Heart left ventricle (tissue), 16 donors: ENCODE measurements at regions of chr2 and their contacts with region 1.

Region 1: DNA sequence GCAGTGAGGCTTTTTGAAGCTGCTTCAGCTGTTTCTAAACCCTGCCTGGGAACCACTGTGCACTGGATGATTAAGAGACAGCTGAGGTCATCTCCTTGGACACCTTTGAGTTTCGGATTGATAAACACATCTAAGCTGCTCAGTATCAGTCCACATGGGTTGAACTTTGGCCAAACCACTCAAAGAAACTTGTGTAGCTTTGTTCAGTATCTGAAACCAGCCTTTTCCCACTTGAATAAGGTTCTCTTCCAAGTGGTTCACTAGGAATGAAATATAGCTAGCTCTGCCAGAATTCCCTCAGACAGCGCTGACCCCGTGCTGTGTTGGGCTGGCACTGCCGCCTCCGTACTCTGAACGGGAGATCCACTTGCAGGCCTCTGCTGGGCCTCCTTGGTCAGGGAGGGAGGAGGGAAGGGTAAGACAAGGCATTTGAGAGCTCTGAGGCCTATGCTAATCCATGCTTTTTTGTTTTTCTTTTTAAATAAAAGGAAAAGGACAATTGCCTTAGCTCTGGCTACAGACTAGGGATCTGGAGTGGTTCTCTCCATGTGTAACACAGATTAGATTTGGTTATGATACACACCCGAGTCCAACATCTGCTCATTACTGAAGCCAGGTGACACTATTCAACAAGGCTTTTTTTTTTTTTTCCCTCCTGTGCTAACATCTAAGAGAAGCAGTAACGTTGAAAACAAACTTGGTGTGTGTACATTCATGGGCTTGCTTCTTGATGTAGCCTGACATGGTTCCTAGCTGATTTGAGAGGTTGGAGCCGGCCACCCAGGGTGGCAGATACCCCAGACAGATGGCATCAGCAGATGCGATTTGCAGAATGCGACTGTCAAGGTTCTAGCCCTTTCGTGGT is 67.7 kb downstream of the NCK2 start:
- DNase-seq: peak in 2 of 5 donors; percentile 43 to 56
- ATAC-seq: peak; percentile 88 to 92 (median 90)
- H3K4me3 ChIP-seq: no peak overlapping the region
- H3K27ac ChIP-seq: peak overlapping the region in 5 of 12 donors; percentile 1 to 62 (median 17)
- H3K4me1 ChIP-seq: peaks cover 4 to 60% (median 41%) of the 10 kb centered on the region in 12 donors
- H3K27me3 ChIP-seq: no peaks in the 10 kb centered on the region
- CTCF ChIP-seq: peak in 1 of 12 donors; percentile 28
- POLR2A ChIP-seq: no peak

Region 2: DNA sequence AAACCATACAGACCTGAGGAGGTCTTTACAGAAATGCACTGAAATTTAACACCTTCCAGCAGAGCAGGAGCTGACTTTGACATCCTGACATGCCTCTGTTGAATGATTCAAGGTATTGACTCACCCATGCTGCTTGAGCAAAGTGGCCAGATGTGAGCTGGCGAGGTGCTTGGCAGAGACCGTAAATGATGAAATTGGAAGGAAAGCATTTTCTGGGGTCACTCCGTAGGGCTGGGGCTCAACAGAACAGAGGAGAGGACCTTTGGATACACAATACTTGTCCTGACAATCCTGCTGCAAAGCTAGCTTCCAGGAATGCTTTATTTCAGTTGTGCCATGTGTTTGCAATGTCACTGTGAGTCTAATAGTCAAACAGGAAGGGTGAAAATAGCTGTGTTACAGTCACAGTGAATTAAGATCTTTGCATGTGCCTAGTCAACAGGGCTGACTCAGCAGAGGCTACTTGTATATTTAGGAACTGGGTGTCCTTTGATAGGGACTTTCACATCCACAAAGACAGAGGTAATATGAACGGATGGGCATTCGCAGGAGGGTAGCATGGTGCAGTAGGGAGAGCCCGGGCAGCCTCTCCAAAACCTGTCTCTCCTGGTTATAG is 99.3 kb before region 1 on chr2:
- intact Hi-C with region 1: no loop called
- DNase-seq: no peak
- ATAC-seq: peak in 3 of 4 donors; percentile 24 to 36 (median 27)
- H3K4me3 ChIP-seq: no peak overlapping the region
- H3K27ac ChIP-seq: no peak overlapping the region
- H3K4me1 ChIP-seq: peaks cover 0 to 4% (median 0%) of the 10 kb centered on the region in 12 donors
- H3K27me3 ChIP-seq: no peaks in the 10 kb centered on the region
- CTCF ChIP-seq: no peak
- POLR2A ChIP-seq: no peak

Region 3: DNA sequence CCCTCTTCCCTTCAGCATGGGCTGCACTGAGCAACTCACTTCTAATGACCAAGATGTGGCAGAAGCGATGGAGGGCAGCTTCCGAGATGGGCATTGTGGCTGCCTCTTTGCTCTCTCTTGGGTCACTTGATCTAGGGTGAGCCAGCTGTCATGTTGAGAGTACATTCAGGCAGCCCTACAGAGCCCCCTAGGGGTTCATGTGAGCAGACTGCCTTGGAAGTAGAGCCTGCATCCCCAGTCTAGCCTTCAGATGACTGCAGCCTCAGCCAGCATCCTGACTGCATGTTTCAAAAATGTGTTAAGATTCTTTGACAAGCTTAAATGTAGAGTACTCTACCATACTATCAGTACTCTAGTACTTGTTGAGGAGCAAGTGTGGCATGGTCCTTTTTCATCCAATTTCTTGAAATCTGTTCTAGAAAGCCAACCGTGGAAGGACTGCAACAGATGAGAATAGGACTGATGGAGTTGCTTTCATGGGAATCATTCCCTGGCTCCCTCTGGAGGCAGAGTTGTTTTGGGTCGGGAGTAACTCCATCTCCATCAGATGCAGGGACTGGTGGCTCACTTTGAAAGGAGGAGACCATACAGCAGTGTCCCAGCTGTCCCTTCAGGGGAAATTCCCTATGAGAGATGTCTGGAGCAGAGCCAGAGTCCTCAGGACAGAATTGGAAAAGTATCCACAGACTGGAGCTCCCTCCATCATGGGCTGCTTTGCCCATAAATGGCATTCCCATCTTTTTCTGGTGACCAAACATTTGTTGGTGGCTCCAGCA is 76.4 kb after region 1 on chr2:
- intact Hi-C with region 1: loop called in 1 of 10 experiments (anchors 10 kb)
- DNase-seq: peak in 2 of 5 donors; percentile 38 to 40
- ATAC-seq: peak; percentile 13 to 38 (median 29)
- H3K4me3 ChIP-seq: no peak overlapping the region
- H3K27ac ChIP-seq: peak overlapping the region in 3 of 12 donors; percentile 1 to 20 (median 14)
- H3K4me1 ChIP-seq: peaks cover 5 to 72% (median 38%) of the 10 kb centered on the region in 12 donors
- H3K27me3 ChIP-seq: no peaks in the 10 kb centered on the region
- CTCF ChIP-seq: peak in 2 of 12 donors; percentile 11 to 20
- POLR2A ChIP-seq: no peak